ENCODE measurements at regions of chr1 and their contacts with region 1.

Region 1: GRCh38 chr1:95043141-95043980 is 29.4 kb downstream of the ALG14 start:
- DNase-seq: no peak
- H3K4me3 ChIP-seq: no peak overlapping the region
- CTCF ChIP-seq: peak; percentile 95

Region 2: GRCh38 chr1:94827434-94827833 is 215.9 kb before region 1 on chr1:
- CTCF ChIA-PET with region 1: interaction called, 16 read pairs
- POLR2A ChIA-PET with region 1: no interaction called
- DNase-seq: no peak
- H3K4me3 ChIP-seq: no peak overlapping the region
- CTCF ChIP-seq: no peak

Region 3: DNA sequence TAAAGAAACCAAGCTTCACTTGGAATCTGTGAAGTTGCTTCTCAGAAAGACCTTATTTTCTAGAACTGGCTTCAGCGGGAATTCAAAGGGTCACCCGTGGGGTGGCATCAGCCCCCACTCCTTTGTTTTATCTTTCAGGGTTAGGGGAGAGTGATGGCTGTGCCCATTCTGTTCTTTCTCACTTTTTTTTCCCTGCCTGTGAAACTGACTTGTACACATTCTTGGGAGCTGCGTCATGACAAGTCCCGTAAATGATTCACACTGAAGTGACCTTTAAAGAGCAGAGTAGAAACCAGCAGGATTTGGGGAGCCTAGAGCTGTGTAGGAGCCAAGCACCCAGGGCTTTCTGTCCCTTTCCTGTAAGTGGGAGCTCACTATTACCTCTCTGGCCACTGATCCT is 179.4 kb before region 1 on chr1:
- CTCF ChIA-PET with region 1: interaction called, 290 read pairs
- POLR2A ChIA-PET with region 1: no interaction called
- DNase-seq: peak; percentile 74
- H3K4me3 ChIP-seq: no peak overlapping the region
- CTCF ChIP-seq: no peak

Region 4: GRCh38 chr1:94903280-94904009 is 139.9 kb before region 1 on chr1:
- CTCF ChIA-PET with region 1: interaction called, 30 read pairs
- POLR2A ChIA-PET with region 1: no interaction called
- DNase-seq: no peak
- H3K4me3 ChIP-seq: no peak overlapping the region
- CTCF ChIP-seq: no peak

Region 5: DNA sequence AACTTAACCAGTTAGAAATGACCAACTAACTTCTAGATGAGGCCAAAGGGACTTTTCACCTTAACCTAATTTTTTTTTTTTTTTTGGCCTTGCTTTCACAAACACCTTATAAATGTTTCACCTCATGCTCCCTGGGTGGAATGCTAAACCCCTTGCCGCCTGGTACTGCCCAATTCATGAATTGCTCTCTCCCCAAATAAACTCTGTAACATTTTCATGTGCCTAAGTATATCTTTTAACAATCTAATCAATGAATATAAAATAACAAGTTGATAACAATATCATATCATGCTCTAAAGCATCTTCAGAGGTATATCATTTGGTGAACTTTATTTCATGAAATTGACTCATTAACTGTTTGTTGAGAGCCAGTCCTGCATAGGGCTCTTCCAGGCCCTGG is 105.5 kb before region 1 on chr1:
- CTCF ChIA-PET with region 1: interaction called, 13 read pairs
- POLR2A ChIA-PET with region 1: no interaction called
- DNase-seq: no peak
- H3K4me3 ChIP-seq: no peak overlapping the region
- CTCF ChIP-seq: no peak

Region 6: GRCh38 chr1:95467036-95467435 is 423.7 kb after region 1 on chr1:
- CTCF ChIA-PET with region 1: no interaction called
- POLR2A ChIA-PET with region 1: no interaction called
- DNase-seq: no peak
- H3K4me3 ChIP-seq: no peak overlapping the region
- CTCF ChIP-seq: no peak